ENCODE measurements at regions of chr14 and their contacts with region 1.

Region 1: GRCh38 chr14:75560962-75561432 is 17.4 kb upstream of the FLVCR2 start:
- DNase-seq: peak; percentile 65
- ATAC-seq: peak; percentile 16
- H3K4me3 Mint-ChIP-seq: no peak overlapping the region
- H3K27ac Mint-ChIP-seq: peak overlapping the region; percentile 78
- H3K4me1 Mint-ChIP-seq: peaks cover 68% of the 10 kb centered on the region
- H3K27me3 Mint-ChIP-seq: no peaks in the 10 kb centered on the region

Region 2: DNA sequence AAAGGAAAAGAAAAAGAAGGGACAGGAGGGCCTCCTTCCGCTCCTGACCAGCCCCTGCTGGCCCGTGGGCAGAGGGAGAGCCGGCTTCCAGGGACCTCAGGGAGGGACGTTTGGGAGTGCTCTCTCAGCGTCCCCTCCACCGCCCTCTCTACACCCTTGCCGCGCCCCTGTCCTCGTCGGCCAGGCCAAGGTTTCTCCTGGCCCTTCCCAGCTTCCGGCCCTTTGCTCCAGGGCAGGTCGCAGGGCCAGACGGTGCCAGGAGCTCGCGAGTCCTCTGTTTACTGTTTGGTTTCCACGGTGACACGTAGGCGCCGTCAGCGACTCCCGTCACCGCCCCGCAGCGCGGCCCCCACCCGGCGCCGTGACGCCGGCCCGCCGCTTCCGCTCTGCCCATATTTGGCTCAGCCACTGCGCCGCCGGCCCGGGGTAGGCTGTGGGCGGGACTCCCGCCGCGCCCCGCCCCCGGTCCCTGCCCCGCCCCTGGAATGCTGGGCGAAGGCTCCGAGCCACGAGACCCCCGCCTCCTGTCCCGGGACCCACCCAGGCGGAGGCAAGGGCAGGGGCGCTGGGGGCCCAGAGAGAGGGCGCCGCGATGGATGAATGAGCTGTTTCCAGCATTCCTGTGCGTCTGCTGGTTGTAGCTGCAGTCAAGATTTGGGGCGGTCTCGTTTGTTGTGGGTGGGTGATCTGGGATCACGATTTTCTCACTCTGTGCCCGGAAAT is 266.9 kb before region 1 on chr14:
- CTCF ChIA-PET with region 1: interaction called, 14 read pairs
- DNase-seq: peak; percentile 95
- ATAC-seq: peak; percentile 90
- H3K4me3 Mint-ChIP-seq: peak overlapping the region; percentile 76
- H3K27ac Mint-ChIP-seq: peak overlapping the region; percentile 81
- H3K4me1 Mint-ChIP-seq: peaks cover 21% of the 10 kb centered on the region
- H3K27me3 Mint-ChIP-seq: peaks cover 22% of the 10 kb centered on the region

Region 3: DNA sequence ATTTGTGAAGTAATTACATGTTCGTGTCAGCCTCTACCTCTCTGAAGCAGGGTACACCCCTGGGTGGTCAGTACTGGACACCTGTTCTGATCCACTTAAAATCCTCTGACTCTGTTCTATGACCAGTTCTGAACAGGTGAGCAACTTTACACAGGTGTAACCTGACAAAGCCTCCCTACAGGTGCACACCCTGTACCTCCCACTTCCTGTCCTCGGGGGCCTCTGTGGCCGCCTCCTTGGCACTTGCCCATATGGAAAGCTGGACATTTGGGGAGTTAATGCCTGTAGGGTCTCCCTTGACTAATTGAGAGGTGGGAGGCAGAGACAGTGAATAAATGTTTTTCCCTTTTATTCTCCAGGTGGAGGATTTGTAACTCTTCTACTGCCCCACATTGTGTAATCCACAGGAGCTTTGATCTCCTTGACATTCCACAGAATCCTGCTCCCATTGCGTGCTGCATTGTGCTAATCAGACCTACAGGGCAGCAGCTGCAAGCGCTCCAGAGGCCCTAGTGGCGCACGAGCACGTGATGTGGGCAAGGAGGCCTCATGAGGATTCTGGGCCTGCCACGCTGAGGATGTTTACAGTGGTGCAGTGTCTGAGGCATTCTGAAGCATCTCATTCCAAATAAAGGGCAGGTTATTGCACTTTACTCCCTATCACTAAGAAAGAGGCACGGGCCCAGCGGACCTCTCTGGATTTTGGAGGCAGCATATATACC is 84.6 kb before region 1 on chr14:
- CTCF ChIA-PET with region 1: no interaction called
- DNase-seq: no peak
- ATAC-seq: no peak
- H3K4me3 Mint-ChIP-seq: no peak overlapping the region
- H3K27ac Mint-ChIP-seq: no peak overlapping the region
- H3K4me1 Mint-ChIP-seq: no peaks in the 10 kb centered on the region
- H3K27me3 Mint-ChIP-seq: peaks cover 35% of the 10 kb centered on the region

Region 4: GRCh38 chr14:75487155-75487671 is 73.8 kb before region 1 on chr14:
- CTCF ChIA-PET with region 1: interaction called, 24 read pairs
- DNase-seq: peak; percentile 61
- ATAC-seq: peak; percentile 84
- H3K4me3 Mint-ChIP-seq: no peak overlapping the region
- H3K27ac Mint-ChIP-seq: peak overlapping the region; percentile 73
- H3K4me1 Mint-ChIP-seq: peaks cover 42% of the 10 kb centered on the region
- H3K27me3 Mint-ChIP-seq: no peaks in the 10 kb centered on the region

Region 5: GRCh38 chr14:75514673-75515628 is 46.0 kb before region 1 on chr14:
- CTCF ChIA-PET with region 1: interaction called, 152 read pairs
- DNase-seq: peak; percentile 81
- ATAC-seq: peak; percentile 76
- H3K4me3 Mint-ChIP-seq: peak overlapping the region; percentile 79
- H3K27ac Mint-ChIP-seq: peak overlapping the region; percentile 99
- H3K4me1 Mint-ChIP-seq: peaks cover 52% of the 10 kb centered on the region
- H3K27me3 Mint-ChIP-seq: no peaks in the 10 kb centered on the region

Region 6: DNA sequence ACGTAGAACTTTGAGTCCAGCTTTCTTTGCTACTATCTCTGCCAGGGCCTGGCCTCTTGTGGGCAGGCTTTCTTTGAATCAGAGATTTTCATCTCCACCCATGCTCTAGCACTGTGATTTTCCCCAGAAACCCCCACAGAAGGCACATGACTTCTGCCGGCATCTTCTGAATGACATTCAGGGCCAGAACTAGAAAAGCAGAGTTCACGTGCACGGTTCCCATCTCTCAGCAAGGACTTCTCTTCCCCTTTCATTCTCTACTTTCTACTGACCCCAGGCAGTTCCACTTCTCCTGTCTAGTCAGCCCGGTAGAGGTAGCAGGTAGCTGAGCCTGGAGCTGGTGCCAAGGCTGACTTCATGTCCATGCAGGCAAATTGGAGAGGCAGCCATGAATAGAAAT is 11.8 kb before region 1 on chr14:
- CTCF ChIA-PET with region 1: interaction called, 59 read pairs
- DNase-seq: no peak
- ATAC-seq: peak; percentile 38
- H3K4me3 Mint-ChIP-seq: no peak overlapping the region
- H3K27ac Mint-ChIP-seq: peak overlapping the region; percentile 29
- H3K4me1 Mint-ChIP-seq: peaks cover 72% of the 10 kb centered on the region
- H3K27me3 Mint-ChIP-seq: no peaks in the 10 kb centered on the region

Region 7: DNA sequence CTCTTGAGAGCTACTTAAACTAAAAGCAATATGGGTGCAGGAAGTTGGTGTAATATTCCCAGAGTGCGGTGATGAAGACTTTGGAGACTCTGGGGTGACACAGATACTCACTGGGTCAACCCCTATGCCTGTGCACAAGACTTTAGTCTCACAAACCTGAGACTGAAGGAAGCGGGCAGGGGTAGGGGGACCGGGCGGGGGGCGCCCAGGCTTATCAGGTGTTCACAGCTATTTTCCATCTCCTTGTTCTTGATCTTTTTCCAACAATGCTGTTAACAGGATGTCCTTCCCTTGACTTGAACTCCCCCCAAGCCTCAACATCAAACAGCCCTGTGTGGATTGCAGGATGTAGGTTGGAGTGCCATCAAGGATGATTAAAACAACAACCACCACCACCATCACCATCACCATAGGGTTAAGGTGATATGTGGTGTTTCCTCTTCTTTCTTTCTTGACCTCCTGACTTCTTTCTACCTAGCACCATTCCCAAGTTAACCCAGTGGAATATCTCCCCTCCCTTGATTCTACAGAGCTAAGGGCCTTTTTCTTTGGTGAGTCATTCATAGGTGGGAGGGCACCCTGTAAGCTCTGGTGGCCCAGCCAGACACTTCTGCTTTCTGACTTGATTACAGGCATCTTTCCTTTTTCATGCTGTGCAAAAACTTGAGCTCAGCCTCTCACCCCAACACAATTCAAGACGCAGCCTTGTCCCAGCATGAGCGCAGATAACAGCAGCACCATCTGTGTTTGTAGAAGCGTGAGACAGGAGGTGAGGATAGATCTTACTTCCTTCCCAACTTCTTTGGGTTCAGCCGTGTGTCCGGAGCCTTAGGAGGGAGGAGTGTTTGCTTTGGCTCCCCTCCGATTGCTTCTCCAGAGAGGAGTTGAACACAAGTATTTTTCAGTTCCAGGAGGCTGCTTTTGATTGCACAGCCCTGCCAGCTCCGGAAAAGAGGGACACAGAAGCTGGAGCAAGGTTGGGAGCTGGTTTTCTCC is 44.2 kb after region 1 on chr14:
- CTCF ChIA-PET with region 1: no interaction called
- DNase-seq: no peak
- ATAC-seq: no peak
- H3K4me3 Mint-ChIP-seq: no peak overlapping the region
- H3K27ac Mint-ChIP-seq: no peak overlapping the region
- H3K4me1 Mint-ChIP-seq: no peaks in the 10 kb centered on the region
- H3K27me3 Mint-ChIP-seq: peaks cover 2% of the 10 kb centered on the region

Region 8: DNA sequence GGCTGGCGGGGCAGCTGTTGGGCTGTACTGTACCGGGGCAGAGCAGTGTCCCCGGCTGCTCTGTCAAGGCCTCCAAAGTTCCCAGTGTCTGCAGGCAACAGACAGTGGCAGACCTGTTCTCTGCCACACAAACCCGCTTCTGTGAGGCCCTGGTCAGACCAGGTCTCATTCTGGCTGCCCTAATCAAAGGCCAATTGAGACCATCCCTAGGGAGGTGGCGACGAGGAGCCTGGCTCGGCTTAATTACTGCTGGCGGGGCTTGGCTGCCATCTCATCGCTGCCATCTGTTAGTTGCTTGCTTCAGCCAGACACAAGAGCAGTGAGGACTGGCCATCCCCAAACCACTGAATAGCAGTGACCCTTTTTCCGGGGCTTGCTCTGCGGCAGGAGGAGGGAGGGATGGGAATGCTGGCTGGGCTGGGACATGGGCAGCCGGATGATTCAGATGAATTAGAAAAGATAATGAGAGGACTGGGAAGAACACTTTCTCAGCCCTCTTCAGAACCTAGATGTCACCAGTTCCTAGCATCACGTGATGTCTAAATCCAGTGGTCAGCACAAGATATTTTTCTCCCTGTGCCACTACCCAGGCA is 75.2 kb after region 1 on chr14:
- CTCF ChIA-PET with region 1: no interaction called
- DNase-seq: no peak
- ATAC-seq: no peak
- H3K4me3 Mint-ChIP-seq: no peak overlapping the region
- H3K27ac Mint-ChIP-seq: no peak overlapping the region
- H3K4me1 Mint-ChIP-seq: no peaks in the 10 kb centered on the region
- H3K27me3 Mint-ChIP-seq: no peaks in the 10 kb centered on the region